ENCODE measurements at regions of chr16 and their contacts with region 1.

Region 1: DNA sequence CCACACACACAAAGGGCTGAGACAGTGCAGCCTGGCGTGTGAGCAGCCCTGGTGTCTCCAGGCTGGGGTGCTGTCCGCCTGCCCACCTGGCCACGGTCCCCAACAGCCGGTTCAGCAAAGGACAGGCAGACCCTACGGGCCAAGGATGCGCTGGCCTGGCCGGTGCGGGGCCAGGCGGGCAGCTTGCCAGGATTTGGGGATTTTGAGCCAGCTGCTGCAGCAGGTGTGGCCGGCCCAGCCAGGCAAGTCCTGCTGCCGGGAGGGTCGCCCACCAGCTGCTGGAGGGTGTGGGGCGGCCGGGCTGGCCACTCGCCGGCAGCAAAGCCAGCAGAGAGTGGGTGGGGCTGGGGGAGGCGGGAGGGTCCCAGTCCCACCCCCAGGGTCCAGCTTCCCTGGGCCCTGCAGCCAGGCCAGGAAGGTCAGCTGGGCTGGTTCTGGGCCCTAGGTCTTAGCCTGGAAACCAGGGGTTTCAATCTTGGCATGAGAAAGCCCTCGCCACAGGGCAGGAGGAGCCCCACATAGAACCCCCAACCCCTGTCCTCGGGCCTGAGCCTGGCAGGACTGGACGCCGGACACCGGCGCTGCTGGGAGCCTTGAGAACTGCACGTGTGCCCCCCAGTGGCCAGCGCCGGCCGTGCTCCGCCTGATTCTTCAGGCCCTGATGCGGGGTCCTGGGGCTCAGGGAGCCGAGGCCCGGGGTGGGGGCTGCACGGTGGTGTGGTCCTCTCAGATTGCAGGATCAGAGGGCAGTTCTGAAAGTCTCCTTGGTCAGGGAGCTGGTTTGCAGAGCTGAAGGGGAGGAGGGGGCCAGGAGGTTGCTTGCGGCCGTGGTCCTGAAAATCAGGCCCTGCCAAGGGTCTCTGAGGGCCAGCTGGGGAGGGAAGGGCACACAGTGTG is 17.6 kb upstream of the SSTR5 start:
- DNase-seq: peak; percentile 44
- ATAC-seq: peak; percentile 75

Region 2: GRCh38 chr16:813204-813915 is 241.5 kb before region 1 on chr16:
- intact Hi-C with region 1: loop called (anchors 1 kb)
- DNase-seq: no peak
- ATAC-seq: peak; percentile 76

Measured in Right ventricle myocardium inferior (tissue), 1 donor.